ENCODE measurements at regions of chr10 and their contacts with region 1.

Region 1: DNA sequence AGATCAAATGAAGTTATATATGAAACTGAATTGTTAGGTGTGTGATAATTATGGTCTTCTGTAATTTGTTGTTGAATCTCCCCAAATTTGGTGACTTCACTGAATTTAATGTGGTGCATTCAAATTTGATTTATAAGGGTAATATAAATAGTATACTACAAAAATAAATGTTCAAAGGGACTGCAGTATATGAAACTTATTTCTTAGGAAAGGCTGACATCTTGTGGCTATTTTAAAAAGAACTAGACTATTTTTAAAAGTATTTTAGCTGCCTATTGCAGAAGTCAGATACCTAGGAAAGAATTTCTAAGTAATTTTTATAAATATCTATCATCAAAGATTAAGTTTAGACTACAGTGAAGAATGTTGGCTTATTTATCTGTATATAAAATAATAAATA is 36.6 kb downstream of the ATRNL1 start:
- DNase-seq: no peak
- ATAC-seq: peak in 3 of 4 donors; percentile 42 to 72 (median 59)
- H3K4me3 ChIP-seq: no peak overlapping the region
- H3K27ac ChIP-seq: no peak overlapping the region
- H3K4me1 ChIP-seq: no peaks in the 10 kb centered on the region
- H3K27me3 ChIP-seq: no peaks in the 10 kb centered on the region
- CTCF ChIP-seq: peak; percentile 63

Region 2: DNA sequence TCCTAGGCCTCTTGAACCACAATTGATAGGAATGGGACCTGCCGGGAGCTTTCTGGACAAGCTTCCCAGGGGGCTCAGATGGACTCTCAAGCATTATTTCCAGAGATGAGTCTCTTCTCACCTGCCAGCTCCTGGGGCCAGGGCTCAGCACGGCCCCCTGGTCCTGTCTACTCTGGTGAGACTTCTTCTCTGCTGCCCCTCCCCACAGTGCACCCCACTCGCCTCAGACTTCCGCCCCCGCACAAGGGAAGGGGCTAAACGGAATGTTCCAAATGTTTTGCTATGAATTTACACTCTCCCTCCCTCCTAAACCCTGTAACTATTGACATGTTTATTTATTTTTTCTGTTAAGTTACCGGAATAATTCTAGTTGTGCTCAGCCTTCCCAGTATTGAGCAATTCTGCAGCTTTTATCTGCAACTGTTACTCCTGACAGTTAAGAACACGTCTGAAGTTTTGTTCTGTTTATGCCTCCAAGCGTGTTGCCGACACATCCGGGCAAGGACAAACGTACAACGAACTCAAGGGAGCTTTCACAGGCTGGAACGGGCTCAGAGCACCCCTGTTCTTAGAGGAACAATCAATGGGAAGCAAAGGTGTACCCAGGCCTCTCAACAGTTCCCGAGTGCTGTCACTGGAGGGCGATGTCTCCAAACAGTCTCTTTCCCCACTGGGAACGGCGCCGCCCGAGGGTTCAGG is 253.0 kb before region 1 on chr10:
- intact Hi-C with region 1: loop called (anchors 2 to 5 kb)
- DNase-seq: peak; percentile 68 to 72
- ATAC-seq: peak; percentile 87 to 93 (median 91)
- H3K4me3 ChIP-seq: no peak overlapping the region
- H3K27ac ChIP-seq: no peak overlapping the region
- H3K4me1 ChIP-seq: no peaks in the 10 kb centered on the region
- H3K27me3 ChIP-seq: no peaks in the 10 kb centered on the region
- CTCF ChIP-seq: peak; percentile 75

Measured in psoas muscle (tissue), 8 donors.